CD8-positive, alpha-beta T cell (primary cell): ENCODE measurements at regions of chr19 and their contacts with region 1.

Region 1: DNA sequence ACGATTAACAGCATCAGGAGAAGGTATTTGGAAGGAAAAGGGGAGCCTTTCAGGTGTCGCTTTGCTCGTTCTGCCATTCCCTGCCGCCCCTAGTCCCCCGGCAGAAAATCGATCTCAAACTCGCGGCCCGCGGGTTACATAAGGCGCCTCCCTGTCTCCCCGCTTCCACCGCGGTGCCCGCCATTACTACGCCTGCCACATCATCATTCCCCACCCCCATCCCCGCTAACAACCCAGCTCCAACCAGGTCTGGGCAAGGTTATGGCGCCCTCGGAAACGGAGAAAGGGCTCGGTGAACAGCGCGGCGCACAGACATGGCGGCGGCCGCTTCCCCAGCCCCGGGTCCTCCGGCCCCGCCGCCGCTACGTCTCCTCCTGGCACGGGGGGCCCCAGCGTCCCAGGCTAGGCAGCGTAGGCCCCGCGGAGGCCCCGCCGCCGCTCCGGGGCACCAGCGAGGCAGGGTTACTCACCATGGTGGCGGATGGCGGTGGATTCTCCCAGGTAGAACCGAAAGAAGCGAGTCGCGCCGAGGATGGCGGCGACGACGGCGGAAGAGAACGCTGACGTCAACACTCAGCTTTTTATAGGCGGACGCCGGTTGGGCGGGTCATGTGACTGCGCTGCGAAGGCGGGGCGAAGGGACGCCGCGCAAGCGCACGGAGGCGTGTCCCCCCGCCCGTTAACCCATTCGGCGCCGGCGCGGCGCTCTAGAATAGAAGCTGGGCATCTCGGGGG is at the start of gene EEF2:
- DNase-seq: peak; percentile 82 to 96 (median 90)
- ATAC-seq: peak; percentile 54
- H3K4me3 ChIP-seq: peak within 1 kb of the TSS; percentile 70 to 78
- H3K4me3 Mint-ChIP-seq: peak within 1 kb of the TSS; percentile 92
- H3K27ac ChIP-seq: peak within 1 kb of the TSS; percentile 83 to 85
- H3K27ac Mint-ChIP-seq: peak within 1 kb of the TSS; percentile 97
- H3K4me1 ChIP-seq: peaks cover 52% of the 10 kb centered on the region
- H3K4me1 Mint-ChIP-seq: peaks cover 57% of the 10 kb centered on the region
- H3K27me3 ChIP-seq: no peaks in the 10 kb centered on the region
- H3K27me3 Mint-ChIP-seq: no peaks in the 10 kb centered on the region
- CTCF ChIP-seq: no peak
- total RNA-seq, gene EEF2: 2,844 to 2,933 TPM

Region 2: DNA sequence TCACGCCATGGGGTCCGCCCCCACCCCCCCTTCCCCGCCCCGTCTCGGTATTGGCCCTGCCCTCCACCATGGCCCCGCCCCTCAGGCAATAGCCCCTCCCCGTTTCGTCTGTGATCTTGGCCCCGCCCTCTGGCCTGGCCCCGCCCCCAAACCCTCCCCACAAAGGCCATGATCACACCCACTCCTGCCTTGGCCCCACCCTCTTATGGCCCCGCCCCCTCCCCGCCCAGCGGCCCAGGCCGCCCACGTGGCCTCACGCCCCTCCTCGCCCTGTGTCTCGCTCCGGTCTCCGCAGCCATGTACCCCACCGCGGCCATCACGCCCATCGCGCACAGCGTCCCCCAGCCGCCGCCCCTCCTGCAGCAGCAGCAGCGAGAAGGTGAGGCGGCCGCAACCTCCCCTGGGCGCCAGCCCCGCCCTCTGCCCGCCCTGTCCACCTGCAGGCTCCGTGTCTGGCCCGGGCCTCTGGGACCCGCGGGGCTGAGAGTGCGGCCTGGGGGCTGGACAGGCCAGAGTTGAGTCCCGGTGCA is 699.4 kb before region 1 on chr19:
- CTCF ChIA-PET with region 1: no interaction called
- POLR2A ChIA-PET with region 1: no interaction called
- intact Hi-C with region 1: no loop called
- DNase-seq: peak in 7 of 9 experiments; percentile 39 to 75 (median 56)
- ATAC-seq: peak; percentile 54
- H3K4me3 ChIP-seq: no peak overlapping the region
- H3K4me3 Mint-ChIP-seq: no peak overlapping the region
- H3K27ac ChIP-seq: no peak overlapping the region
- H3K27ac Mint-ChIP-seq: no peak overlapping the region
- H3K4me1 ChIP-seq: peaks cover 15% of the 10 kb centered on the region
- H3K4me1 Mint-ChIP-seq: peaks cover 13% of the 10 kb centered on the region
- H3K27me3 ChIP-seq: peaks cover 0 to 2% of the 10 kb centered on the region in 2 experiments
- H3K27me3 Mint-ChIP-seq: peaks cover 9% of the 10 kb centered on the region
- CTCF ChIP-seq: no peak

Region 3: GRCh38 chr19:3626473-3627350 is 358.4 kb before region 1 on chr19 and contains the start of gene CACTIN:
- CTCF ChIA-PET with region 1: no interaction called
- POLR2A ChIA-PET with region 1: no interaction called
- intact Hi-C with region 1: loop called in 1 of 2 experiments (anchors 5 kb)
- DNase-seq: peak; percentile 97 to 99 (median 99)
- ATAC-seq: peak; percentile 99
- H3K4me3 ChIP-seq: peak within 1 kb of the TSS; percentile 77 to 80
- H3K4me3 Mint-ChIP-seq: peak within 1 kb of the TSS; percentile 85
- H3K27ac ChIP-seq: peak within 1 kb of the TSS; percentile 74 to 99
- H3K27ac Mint-ChIP-seq: peak within 1 kb of the TSS; percentile 99
- H3K4me1 ChIP-seq: peaks cover 20% of the 10 kb centered on the region
- H3K4me1 Mint-ChIP-seq: peaks cover 26% of the 10 kb centered on the region
- H3K27me3 ChIP-seq: no peaks in the 10 kb centered on the region
- H3K27me3 Mint-ChIP-seq: no peaks in the 10 kb centered on the region
- CTCF ChIP-seq: no peak
- total RNA-seq, gene CACTIN: 32.5 to 33.0 TPM

Region 4: DNA sequence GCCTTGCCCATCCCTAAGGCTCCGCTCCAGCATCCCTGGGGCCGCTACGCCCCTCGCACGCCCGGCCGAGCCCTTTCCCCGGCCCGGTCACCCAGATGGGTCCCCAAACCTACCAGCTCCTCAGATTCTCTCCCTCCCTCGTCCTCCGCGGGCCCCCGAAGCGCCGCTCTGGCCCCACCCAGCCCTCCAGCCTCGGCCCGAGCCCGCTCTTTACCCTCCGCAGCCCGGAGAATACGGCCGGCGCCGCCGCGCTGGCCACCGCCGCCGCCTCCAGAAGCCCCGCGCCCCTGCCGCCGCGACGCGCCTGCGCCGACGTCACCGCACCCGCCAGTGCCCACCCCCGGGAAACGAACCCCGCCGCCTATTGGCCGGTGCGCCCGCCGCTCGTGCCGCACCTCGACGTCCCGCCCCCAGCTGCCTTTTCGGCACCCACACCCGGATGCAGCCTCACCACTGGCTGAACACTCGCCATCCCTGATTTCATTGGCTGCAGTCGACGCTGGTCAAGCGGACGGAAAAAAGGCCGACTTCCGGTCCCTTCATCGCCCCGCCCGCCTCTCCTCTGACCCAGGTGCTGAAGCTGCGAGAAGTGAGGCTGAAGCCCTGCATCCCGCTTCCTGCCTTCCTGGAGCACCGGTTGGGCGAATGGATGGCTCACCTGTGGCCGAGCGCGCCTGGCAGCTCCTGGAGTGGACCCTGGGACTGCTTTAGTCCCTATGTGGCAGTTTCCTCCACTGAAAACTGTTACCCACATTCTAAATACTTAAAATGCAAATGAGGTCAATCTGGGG is 14.1 kb before region 1 on chr19 and contains the start of gene DAPK3:
- CTCF ChIA-PET with region 1: interaction called, 11 read pairs
- POLR2A ChIA-PET with region 1: interaction called, 21 read pairs
- intact Hi-C with region 1: loop called (anchors 1 to 2 kb)
- DNase-seq: peak; percentile 70 to 93 (median 90)
- ATAC-seq: peak; percentile 91
- H3K4me3 ChIP-seq: peak within 1 kb of the TSS; percentile 92 to 93
- H3K4me3 Mint-ChIP-seq: peak within 1 kb of the TSS; percentile 83
- H3K27ac ChIP-seq: peak within 1 kb of the TSS; percentile 74 to 84
- H3K27ac Mint-ChIP-seq: peak within 1 kb of the TSS; percentile 78
- H3K4me1 ChIP-seq: peaks cover 20% of the 10 kb centered on the region
- H3K4me1 Mint-ChIP-seq: peaks cover 36% of the 10 kb centered on the region
- H3K27me3 ChIP-seq: no peaks in the 10 kb centered on the region
- H3K27me3 Mint-ChIP-seq: no peaks in the 10 kb centered on the region
- CTCF ChIP-seq: no peak
- total RNA-seq, gene DAPK3: 20.7 to 21.5 TPM

Region 5: GRCh38 chr19:4108767-4109625 is 123.9 kb after region 1 on chr19:
- CTCF ChIA-PET with region 1: no interaction called
- POLR2A ChIA-PET with region 1: interaction called, 10 read pairs
- intact Hi-C with region 1: loop called (anchors 2 to 5 kb)
- DNase-seq: peak; percentile 59 to 96 (median 83)
- ATAC-seq: peak; percentile 55
- H3K4me3 ChIP-seq: peak overlapping the region in 1 of 2 experiments; percentile 22
- H3K4me3 Mint-ChIP-seq: peak overlapping the region; percentile 60
- H3K27ac ChIP-seq: peak overlapping the region; percentile 73 to 74
- H3K27ac Mint-ChIP-seq: peak overlapping the region; percentile 99
- H3K4me1 ChIP-seq: peaks cover 60% of the 10 kb centered on the region
- H3K4me1 Mint-ChIP-seq: peaks cover 68% of the 10 kb centered on the region
- H3K27me3 ChIP-seq: no peaks in the 10 kb centered on the region
- H3K27me3 Mint-ChIP-seq: no peaks in the 10 kb centered on the region
- CTCF ChIP-seq: no peak

Region 6: GRCh38 chr19:4139614-4140236 is 154.7 kb after region 1 on chr19:
- CTCF ChIA-PET with region 1: interaction called, 25 read pairs
- POLR2A ChIA-PET with region 1: interaction called, 8 read pairs
- intact Hi-C with region 1: loop called (anchors 1 kb)
- DNase-seq: peak; percentile 75 to 96 (median 83)
- ATAC-seq: peak; percentile 96
- H3K4me3 ChIP-seq: no peak overlapping the region
- H3K4me3 Mint-ChIP-seq: no peak overlapping the region
- H3K27ac ChIP-seq: no peak overlapping the region
- H3K27ac Mint-ChIP-seq: no peak overlapping the region
- H3K4me1 ChIP-seq: peaks cover 8% of the 10 kb centered on the region
- H3K4me1 Mint-ChIP-seq: peaks cover 8% of the 10 kb centered on the region
- H3K27me3 ChIP-seq: no peaks in the 10 kb centered on the region
- H3K27me3 Mint-ChIP-seq: peaks cover 11% of the 10 kb centered on the region
- CTCF ChIP-seq: peak; percentile 83

Region 7: GRCh38 chr19:4208385-4209094 is 223.5 kb after region 1 on chr19:
- CTCF ChIA-PET with region 1: interaction called, 29 read pairs
- POLR2A ChIA-PET with region 1: no interaction called
- intact Hi-C with region 1: loop called in 1 of 2 experiments (anchors 1 kb)
- DNase-seq: no peak
- ATAC-seq: no peak
- H3K4me3 ChIP-seq: no peak overlapping the region
- H3K4me3 Mint-ChIP-seq: no peak overlapping the region
- H3K27ac ChIP-seq: no peak overlapping the region
- H3K27ac Mint-ChIP-seq: no peak overlapping the region
- H3K4me1 ChIP-seq: no peaks in the 10 kb centered on the region
- H3K4me1 Mint-ChIP-seq: peaks cover 2% of the 10 kb centered on the region
- H3K27me3 ChIP-seq: no peaks in the 10 kb centered on the region
- H3K27me3 Mint-ChIP-seq: peaks cover 9% of the 10 kb centered on the region
- CTCF ChIP-seq: no peak

Region 8: GRCh38 chr19:4220188-4220587 is 235.1 kb after region 1 on chr19:
- CTCF ChIA-PET with region 1: no interaction called
- POLR2A ChIA-PET with region 1: no interaction called
- intact Hi-C with region 1: no loop called
- DNase-seq: no peak
- ATAC-seq: no peak
- H3K4me3 ChIP-seq: no peak overlapping the region
- H3K4me3 Mint-ChIP-seq: no peak overlapping the region
- H3K27ac ChIP-seq: no peak overlapping the region
- H3K27ac Mint-ChIP-seq: no peak overlapping the region
- H3K4me1 ChIP-seq: no peaks in the 10 kb centered on the region
- H3K4me1 Mint-ChIP-seq: no peaks in the 10 kb centered on the region
- H3K27me3 ChIP-seq: no peaks in the 10 kb centered on the region
- H3K27me3 Mint-ChIP-seq: peaks cover 4% of the 10 kb centered on the region
- CTCF ChIP-seq: no peak

Region 9: GRCh38 chr19:4342615-4343369 is 357.7 kb after region 1 on chr19:
- CTCF ChIA-PET with region 1: no interaction called
- POLR2A ChIA-PET with region 1: no interaction called
- intact Hi-C with region 1: loop called in 1 of 2 experiments (anchors 1 kb)
- DNase-seq: peak; percentile 80 to 99 (median 87)
- ATAC-seq: peak; percentile 78
- H3K4me3 ChIP-seq: peak overlapping the region; percentile 72 to 100
- H3K4me3 Mint-ChIP-seq: peak overlapping the region; percentile 92
- H3K27ac ChIP-seq: peak overlapping the region; percentile 81 to 83
- H3K27ac Mint-ChIP-seq: peak overlapping the region; percentile 91
- H3K4me1 ChIP-seq: peaks cover 20% of the 10 kb centered on the region
- H3K4me1 Mint-ChIP-seq: peaks cover 36% of the 10 kb centered on the region
- H3K27me3 ChIP-seq: no peaks in the 10 kb centered on the region
- H3K27me3 Mint-ChIP-seq: no peaks in the 10 kb centered on the region
- CTCF ChIP-seq: no peak